ENCODE measurements at regions of chr15 and their contacts with region 1.

Region 1: GRCh38 chr15:65275728-65276126 is 11.0 kb downstream of the PARP16 start:
- DNase-seq: no peak
- H3K4me3 ChIP-seq: no peak overlapping the region
- H3K27ac ChIP-seq: no peak overlapping the region
- H3K4me1 ChIP-seq: peaks cover 0 to 13% (median 4%) of the 10 kb centered on the region in 4 experiments
- H3K27me3 ChIP-seq: no peaks in the 10 kb centered on the region

Region 2: DNA sequence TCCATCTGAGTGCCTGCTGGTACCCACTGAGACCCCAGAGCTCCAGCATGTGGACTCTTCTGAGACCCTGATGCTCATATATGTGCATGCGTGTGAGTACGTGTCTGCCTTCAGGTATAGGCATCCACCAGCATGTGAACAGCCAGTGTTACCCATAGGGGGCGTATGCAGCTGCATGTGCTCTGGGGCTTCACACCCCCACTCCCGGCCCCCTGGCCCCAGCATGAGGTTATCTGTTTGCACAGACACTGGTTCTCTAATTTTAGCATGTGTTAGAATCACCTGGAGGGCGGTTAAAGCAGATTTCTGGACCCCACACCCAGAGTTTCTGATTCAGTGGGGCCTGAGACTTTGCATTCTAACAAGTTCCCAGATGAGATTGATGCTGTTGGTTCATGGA is 63.6 kb before region 1 on chr15:
- CTCF ChIA-PET with region 1: interaction called, 17 read pairs
- POLR2A ChIA-PET with region 1: no interaction called
- DNase-seq: peak; percentile 51 to 78 (median 76)
- H3K4me3 ChIP-seq: no peak overlapping the region
- H3K27ac ChIP-seq: no peak overlapping the region
- H3K4me1 ChIP-seq: peaks cover 0 to 14% (median 4%) of the 10 kb centered on the region in 4 experiments
- H3K27me3 ChIP-seq: no peaks in the 10 kb centered on the region

Region 3: GRCh38 chr15:65258375-65259262 is 17.1 kb before region 1 on chr15:
- CTCF ChIA-PET with region 1: interaction called, 13 read pairs
- POLR2A ChIA-PET with region 1: interaction called, 4 read pairs
- DNase-seq: peak; percentile 55 to 83 (median 74)
- H3K4me3 ChIP-seq: peak overlapping the region in 1 of 7 experiments; percentile 31
- H3K27ac ChIP-seq: peak overlapping the region; percentile 2 to 76
- H3K4me1 ChIP-seq: peaks cover 5 to 63% (median 34%) of the 10 kb centered on the region in 4 experiments
- H3K27me3 ChIP-seq: no peaks in the 10 kb centered on the region

Region 4: GRCh38 chr15:65286704-65287519 is 11.2 kb after region 1 on chr15 and contains the start of gene PARP16:
- CTCF ChIA-PET with region 1: interaction called, 23 read pairs
- POLR2A ChIA-PET with region 1: interaction called, 3 read pairs
- DNase-seq: peak; percentile 92 to 97 (median 95)
- H3K4me3 ChIP-seq: peak within 1 kb of the TSS; percentile 35 to 87 (median 69)
- H3K27ac ChIP-seq: peak within 1 kb of the TSS; percentile 25 to 81
- H3K4me1 ChIP-seq: peaks cover 4 to 24% (median 18%) of the 10 kb centered on the region in 4 experiments
- H3K27me3 ChIP-seq: no peaks in the 10 kb centered on the region